ENCODE measurements at regions of chr1 and their contacts with region 1.

Region 1: DNA sequence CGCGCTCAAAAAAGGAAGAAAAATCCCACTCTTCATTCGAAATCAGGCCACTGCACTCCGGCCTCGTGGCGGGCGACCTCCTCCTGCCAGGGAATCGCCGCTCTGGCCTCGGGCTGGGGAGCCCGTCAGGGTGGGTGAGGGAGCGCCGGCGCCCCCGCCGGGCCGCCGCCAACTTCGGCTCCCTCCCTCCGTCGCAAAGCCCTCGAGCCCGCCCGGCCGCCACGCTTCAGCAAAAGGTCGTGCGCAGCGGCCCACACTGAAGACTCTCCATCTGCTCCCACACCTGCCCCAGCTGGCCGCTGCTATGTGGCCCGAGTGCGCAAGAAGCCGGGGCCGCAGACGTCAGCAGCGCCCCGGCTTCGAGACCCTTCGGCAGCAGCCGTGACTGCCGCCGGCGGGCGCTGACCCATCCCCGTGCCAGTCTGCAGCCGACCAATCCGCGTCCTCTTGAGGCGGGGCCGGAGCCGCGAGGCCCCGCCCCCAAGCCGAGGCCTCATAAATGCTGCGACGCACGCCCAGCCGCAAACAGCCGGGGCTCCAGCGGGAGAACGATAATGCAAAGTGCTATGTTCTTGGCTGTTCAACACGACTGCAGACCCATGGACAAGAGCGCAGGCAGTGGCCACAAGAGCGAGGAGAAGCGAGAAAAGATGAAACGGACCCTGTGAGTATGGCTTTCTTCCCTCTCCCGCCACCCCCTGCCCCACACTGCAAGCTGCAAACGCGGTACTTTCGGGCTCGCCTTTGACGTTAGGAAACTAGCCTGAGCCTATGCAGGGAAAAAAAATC is at the start of gene RGS2:
- DNase-seq: peak; percentile 85 to 95
- ATAC-seq: peak; percentile 87 to 95 (median 91)
- H3K4me3 ChIP-seq: peak within 1 kb of the TSS; percentile 96
- H3K4me3 Mint-ChIP-seq: peak within 1 kb of the TSS; percentile 100
- H3K27ac ChIP-seq: peak within 1 kb of the TSS; percentile 91
- H3K27ac Mint-ChIP-seq: peak within 1 kb of the TSS; percentile 95 to 99
- H3K4me1 ChIP-seq: peaks cover 16% of the 10 kb centered on the region
- H3K4me1 Mint-ChIP-seq: peaks cover 36 to 39% of the 10 kb centered on the region in 2 donors
- H3K27me3 ChIP-seq: no peaks in the 10 kb centered on the region
- H3K27me3 Mint-ChIP-seq: no peaks in the 10 kb centered on the region
- CTCF ChIP-seq: no peak
- total RNA-seq, gene RGS2: 117 to 268 (median 154) TPM

Region 2: DNA sequence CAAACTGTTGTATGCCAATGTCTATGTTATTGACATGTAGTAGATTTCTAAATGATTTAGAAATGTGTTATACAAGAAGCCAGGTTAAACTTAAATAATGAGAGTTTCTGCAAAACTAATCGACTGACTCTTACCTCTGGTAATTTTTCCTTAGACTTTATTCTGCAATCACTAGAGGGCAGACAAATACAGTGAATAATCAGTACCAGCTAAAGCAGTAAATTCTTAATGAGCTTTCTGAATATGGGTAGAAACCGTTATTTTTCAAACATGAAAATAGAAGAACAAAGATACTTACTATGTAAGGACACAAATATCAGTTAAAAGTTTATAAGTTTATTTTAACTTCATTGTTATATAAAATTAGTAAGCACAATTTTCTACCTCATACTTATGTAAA is 331.1 kb before region 1 on chr1:
- intact Hi-C with region 1: loop called (anchors 5 kb)
- DNase-seq: peak in 1 of 2 donors; percentile 69
- ATAC-seq: peak in 2 of 3 donors; percentile 70 to 74
- H3K4me3 ChIP-seq: no peak overlapping the region
- H3K4me3 Mint-ChIP-seq: no peak overlapping the region
- H3K27ac ChIP-seq: no peak overlapping the region
- H3K27ac Mint-ChIP-seq: no peak overlapping the region
- H3K4me1 ChIP-seq: no peaks in the 10 kb centered on the region
- H3K4me1 Mint-ChIP-seq: no peaks in the 10 kb centered on the region
- H3K27me3 ChIP-seq: peaks cover 3% of the 10 kb centered on the region
- H3K27me3 Mint-ChIP-seq: no peaks in the 10 kb centered on the region
- CTCF ChIP-seq: peak; percentile 61

Region 3: GRCh38 chr1:192660613-192661012 is 148.1 kb before region 1 on chr1:
- intact Hi-C with region 1: no loop called
- DNase-seq: no peak
- ATAC-seq: no peak
- H3K4me3 ChIP-seq: no peak overlapping the region
- H3K4me3 Mint-ChIP-seq: no peak overlapping the region
- H3K27ac ChIP-seq: no peak overlapping the region
- H3K27ac Mint-ChIP-seq: no peak overlapping the region
- H3K4me1 ChIP-seq: no peaks in the 10 kb centered on the region
- H3K4me1 Mint-ChIP-seq: no peaks in the 10 kb centered on the region
- H3K27me3 ChIP-seq: no peaks in the 10 kb centered on the region
- H3K27me3 Mint-ChIP-seq: no peaks in the 10 kb centered on the region
- CTCF ChIP-seq: no peak

Region 4: GRCh38 chr1:192775631-192776030 is 33.1 kb before region 1 on chr1:
- intact Hi-C with region 1: no loop called
- DNase-seq: no peak
- ATAC-seq: no peak
- H3K4me3 ChIP-seq: no peak overlapping the region
- H3K4me3 Mint-ChIP-seq: no peak overlapping the region
- H3K27ac ChIP-seq: no peak overlapping the region
- H3K27ac Mint-ChIP-seq: no peak overlapping the region
- H3K4me1 ChIP-seq: no peaks in the 10 kb centered on the region
- H3K4me1 Mint-ChIP-seq: no peaks in the 10 kb centered on the region
- H3K27me3 ChIP-seq: no peaks in the 10 kb centered on the region
- H3K27me3 Mint-ChIP-seq: peaks cover 0 to 13% of the 10 kb centered on the region in 2 donors
- CTCF ChIP-seq: no peak

Region 5: DNA sequence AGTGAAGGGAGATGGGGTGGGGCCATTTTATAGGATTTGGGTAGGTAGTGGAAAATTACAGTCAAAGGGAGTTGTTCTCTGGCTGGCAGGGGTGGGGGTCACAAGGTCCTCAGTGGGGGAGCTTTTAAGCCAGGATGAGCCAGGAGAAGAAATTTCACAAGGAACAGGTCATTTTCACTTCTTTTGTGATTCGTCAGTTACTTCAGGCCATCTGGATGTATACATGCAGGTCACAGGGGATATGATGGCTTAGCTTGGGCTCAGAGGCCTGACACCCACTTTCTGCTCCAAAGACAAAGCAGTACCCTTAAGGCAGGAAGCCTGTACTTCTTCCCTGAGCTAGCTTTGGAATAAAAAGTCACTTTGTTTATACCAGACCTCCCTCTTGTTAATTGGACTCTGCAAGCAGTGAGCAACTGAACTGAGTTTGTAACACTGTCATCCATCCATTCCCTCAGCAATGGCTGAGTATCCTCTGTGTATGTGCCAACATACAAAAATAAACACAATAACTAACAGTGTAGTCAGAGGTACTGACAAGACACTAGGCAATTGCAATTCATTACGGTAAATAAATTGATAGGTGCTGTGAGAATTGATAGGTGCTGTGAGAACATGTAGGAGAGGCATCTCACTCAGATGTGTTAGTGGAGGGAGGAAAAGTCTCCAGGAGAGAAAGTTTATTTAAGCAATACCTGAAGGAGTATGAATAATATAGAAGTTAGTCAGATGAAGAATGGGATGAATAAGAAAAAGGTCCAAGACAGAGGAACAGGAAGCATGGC is 14.5 kb before region 1 on chr1:
- intact Hi-C with region 1: no loop called
- DNase-seq: no peak
- ATAC-seq: no peak
- H3K4me3 ChIP-seq: no peak overlapping the region
- H3K4me3 Mint-ChIP-seq: no peak overlapping the region
- H3K27ac ChIP-seq: no peak overlapping the region
- H3K27ac Mint-ChIP-seq: no peak overlapping the region
- H3K4me1 ChIP-seq: no peaks in the 10 kb centered on the region
- H3K4me1 Mint-ChIP-seq: no peaks in the 10 kb centered on the region
- H3K27me3 ChIP-seq: no peaks in the 10 kb centered on the region
- H3K27me3 Mint-ChIP-seq: peaks cover 3 to 7% of the 10 kb centered on the region in 2 donors
- CTCF ChIP-seq: no peak

Region 6: GRCh38 chr1:192936313-192937018 is 127.8 kb after region 1 on chr1:
- intact Hi-C with region 1: loop called (anchors 2 kb)
- DNase-seq: peak in 1 of 2 donors; percentile 20
- ATAC-seq: peak; percentile 76 to 82 (median 81)
- H3K4me3 ChIP-seq: no peak overlapping the region
- H3K4me3 Mint-ChIP-seq: no peak overlapping the region
- H3K27ac ChIP-seq: peak overlapping the region; percentile 29
- H3K27ac Mint-ChIP-seq: peak overlapping the region; percentile 63 to 76
- H3K4me1 ChIP-seq: peaks cover 2% of the 10 kb centered on the region
- H3K4me1 Mint-ChIP-seq: peaks cover 14 to 22% of the 10 kb centered on the region in 2 donors
- H3K27me3 ChIP-seq: no peaks in the 10 kb centered on the region
- H3K27me3 Mint-ChIP-seq: no peaks in the 10 kb centered on the region
- CTCF ChIP-seq: no peak

Region 7: GRCh38 chr1:193019442-193020026 is 210.8 kb after region 1 on chr1:
- intact Hi-C with region 1: loop called (anchors 1 kb)
- DNase-seq: peak in 1 of 2 donors; percentile 66
- ATAC-seq: peak in 2 of 3 donors; percentile 60 to 68
- H3K4me3 ChIP-seq: no peak overlapping the region
- H3K4me3 Mint-ChIP-seq: no peak overlapping the region
- H3K27ac ChIP-seq: no peak overlapping the region
- H3K27ac Mint-ChIP-seq: no peak overlapping the region
- H3K4me1 ChIP-seq: no peaks in the 10 kb centered on the region
- H3K4me1 Mint-ChIP-seq: no peaks in the 10 kb centered on the region
- H3K27me3 ChIP-seq: no peaks in the 10 kb centered on the region
- H3K27me3 Mint-ChIP-seq: no peaks in the 10 kb centered on the region
- CTCF ChIP-seq: peak; percentile 69

Region 8: DNA sequence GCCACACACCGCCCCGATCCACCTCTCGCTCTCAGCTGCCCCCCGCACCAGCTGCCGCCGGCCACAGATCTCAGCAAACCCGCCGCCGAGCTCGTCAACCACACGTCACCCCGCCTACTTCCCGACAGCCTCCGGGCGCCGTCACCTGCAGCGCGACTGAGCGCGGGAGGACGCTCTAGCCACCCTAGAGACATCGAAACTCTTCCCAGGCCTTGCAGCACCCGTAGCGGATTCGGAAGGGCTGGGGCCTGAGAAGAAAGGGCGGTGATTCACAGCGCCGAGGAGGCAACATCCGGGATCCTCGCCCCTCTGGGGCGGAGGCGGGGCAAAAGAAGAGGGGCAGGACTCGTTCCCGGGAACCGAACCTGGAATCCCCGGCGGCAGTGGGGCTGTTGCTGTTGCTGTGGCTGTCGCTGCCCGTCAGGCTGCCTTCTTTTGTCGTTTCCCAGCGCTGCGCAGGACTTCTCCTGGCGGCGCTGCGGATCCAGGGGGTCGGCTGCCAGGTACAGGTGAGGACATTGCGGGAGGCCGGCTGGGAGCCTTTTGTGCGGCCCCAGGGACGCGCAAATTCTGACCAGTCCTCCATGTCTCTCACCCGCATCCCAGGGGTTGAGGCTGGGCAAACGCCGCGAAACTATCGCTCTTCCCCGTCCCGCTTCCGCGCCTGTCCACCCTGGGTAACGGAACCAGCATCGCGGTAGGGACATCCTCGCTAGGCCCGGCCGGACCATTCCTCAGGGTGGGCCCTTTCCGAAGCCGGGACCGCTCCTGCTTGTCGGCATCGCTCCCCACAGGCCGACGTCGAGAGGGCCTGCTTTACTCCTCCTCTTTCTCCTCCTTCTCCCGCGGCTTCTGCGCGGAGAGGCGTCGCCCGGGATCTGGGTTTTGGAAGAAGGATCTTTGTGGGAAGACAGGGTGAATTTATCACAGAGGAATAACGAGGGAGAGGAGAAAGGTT is 250.8 kb after region 1 on chr1 and contains the starts of genes RO60 and UCHL5:
- intact Hi-C with region 1: loop called (anchors 1 kb)
- DNase-seq: peak; percentile 87 to 98
- ATAC-seq: peak; percentile 85 to 96 (median 88)
- H3K4me3 ChIP-seq: peak within 1 kb of the TSS; percentile 99
- H3K4me3 Mint-ChIP-seq: peak within 1 kb of the TSS; percentile 98
- H3K27ac ChIP-seq: peak within 1 kb of the TSS; percentile 98
- H3K27ac Mint-ChIP-seq: peak within 1 kb of the TSS; percentile 98
- H3K4me1 ChIP-seq: peaks cover 14% of the 10 kb centered on the region
- H3K4me1 Mint-ChIP-seq: peaks cover 67 to 77% of the 10 kb centered on the region in 2 donors
- H3K27me3 ChIP-seq: no peaks in the 10 kb centered on the region
- H3K27me3 Mint-ChIP-seq: no peaks in the 10 kb centered on the region
- CTCF ChIP-seq: no peak
- total RNA-seq, gene RO60: 74.3 to 95.5 (median 78.9) TPM
- total RNA-seq, gene UCHL5: 44.3 to 53.9 (median 51.9) TPM

Region 9: DNA sequence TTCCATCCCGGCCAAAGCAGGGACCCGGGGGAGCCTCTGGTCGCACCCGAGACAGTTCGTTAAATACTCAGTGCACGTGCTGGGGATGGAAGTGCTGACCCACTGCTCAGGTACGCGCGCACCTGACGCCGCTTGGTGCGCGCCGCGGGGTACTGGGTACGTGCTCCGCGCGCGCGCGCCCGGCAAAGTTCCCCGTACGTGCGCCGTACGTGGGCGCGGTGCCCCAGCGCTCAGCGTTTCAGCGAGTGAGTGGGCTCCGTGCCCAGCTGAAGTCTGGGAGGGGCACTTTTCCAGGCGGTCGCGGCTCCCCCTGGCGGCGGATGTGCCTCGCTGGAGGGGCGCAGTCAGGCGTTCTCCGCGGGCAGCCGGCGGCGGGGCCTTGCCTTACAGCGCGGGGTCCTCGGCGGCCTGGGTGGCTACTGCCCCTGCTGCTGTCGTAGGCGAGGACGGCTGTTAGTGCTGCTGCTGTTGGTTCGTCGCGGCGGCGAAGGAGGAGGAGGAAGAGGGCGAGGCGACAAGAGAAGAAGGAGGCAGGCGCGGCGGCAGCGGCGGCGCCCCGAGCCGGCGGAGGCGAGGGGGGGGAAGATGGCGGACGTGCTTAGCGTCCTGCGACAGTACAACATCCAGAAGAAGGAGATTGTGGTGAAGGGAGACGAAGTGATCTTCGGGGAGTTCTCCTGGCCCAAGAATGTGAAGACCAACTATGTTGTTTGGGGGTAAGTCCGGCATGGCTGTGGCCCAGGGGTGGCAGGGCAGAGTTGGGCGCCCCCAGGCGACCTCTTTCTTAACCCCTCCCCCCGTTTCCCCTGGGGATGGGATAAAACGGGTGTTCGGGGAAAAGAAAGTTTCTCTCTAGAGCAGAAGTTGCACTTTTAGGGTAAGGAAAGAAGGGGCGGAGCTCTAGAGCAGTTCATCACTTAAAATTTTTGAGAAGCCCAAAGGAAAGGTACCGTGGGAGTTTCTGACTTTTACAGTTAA is 313.2 kb after region 1 on chr1 and contains the start of gene CDC73:
- intact Hi-C with region 1: loop called (anchors 2 kb)
- DNase-seq: peak; percentile 98 to 99
- ATAC-seq: peak; percentile 91 to 98 (median 94)
- H3K4me3 ChIP-seq: peak within 1 kb of the TSS; percentile 93
- H3K4me3 Mint-ChIP-seq: peak within 1 kb of the TSS; percentile 93
- H3K27ac ChIP-seq: peak within 1 kb of the TSS; percentile 97
- H3K27ac Mint-ChIP-seq: peak within 1 kb of the TSS; percentile 88 to 95
- H3K4me1 ChIP-seq: peaks cover 13% of the 10 kb centered on the region
- H3K4me1 Mint-ChIP-seq: peaks cover 46 to 51% of the 10 kb centered on the region in 2 donors
- H3K27me3 ChIP-seq: no peaks in the 10 kb centered on the region
- H3K27me3 Mint-ChIP-seq: no peaks in the 10 kb centered on the region
- CTCF ChIP-seq: peak; percentile 96
- total RNA-seq, gene CDC73: 73.2 to 86.0 (median 82.6) TPM

Region 10: DNA sequence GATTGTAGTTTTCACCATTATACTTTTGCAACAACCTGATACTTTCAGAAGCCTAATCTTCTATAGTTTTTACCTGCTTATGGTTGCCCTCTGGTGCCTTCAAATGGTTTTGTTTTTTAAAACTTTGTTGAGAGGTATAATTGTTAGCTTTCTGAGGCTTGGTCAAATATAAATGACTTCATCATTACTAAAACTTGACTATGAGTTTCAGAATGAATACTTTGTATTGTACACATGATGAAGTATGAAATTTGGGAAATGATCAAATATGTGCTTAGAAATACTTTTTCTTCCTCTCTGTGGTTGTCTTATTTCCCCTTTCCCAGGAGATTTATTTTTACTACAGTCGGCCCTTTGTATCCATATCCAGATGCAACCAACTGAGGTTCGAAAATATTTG is 529.5 kb after region 1 on chr1:
- intact Hi-C with region 1: no loop called
- DNase-seq: no peak
- ATAC-seq: no peak
- H3K4me3 ChIP-seq: no peak overlapping the region
- H3K4me3 Mint-ChIP-seq: no peak overlapping the region
- H3K27ac ChIP-seq: no peak overlapping the region
- H3K27ac Mint-ChIP-seq: no peak overlapping the region
- H3K4me1 ChIP-seq: no peaks in the 10 kb centered on the region
- H3K4me1 Mint-ChIP-seq: no peaks in the 10 kb centered on the region
- H3K27me3 ChIP-seq: no peaks in the 10 kb centered on the region
- H3K27me3 Mint-ChIP-seq: no peaks in the 10 kb centered on the region
- CTCF ChIP-seq: no peak

Measured in natural killer cell (primary cell).